ENCODE measurements at regions of chr3 and their contacts with region 1.

Region 1: DNA sequence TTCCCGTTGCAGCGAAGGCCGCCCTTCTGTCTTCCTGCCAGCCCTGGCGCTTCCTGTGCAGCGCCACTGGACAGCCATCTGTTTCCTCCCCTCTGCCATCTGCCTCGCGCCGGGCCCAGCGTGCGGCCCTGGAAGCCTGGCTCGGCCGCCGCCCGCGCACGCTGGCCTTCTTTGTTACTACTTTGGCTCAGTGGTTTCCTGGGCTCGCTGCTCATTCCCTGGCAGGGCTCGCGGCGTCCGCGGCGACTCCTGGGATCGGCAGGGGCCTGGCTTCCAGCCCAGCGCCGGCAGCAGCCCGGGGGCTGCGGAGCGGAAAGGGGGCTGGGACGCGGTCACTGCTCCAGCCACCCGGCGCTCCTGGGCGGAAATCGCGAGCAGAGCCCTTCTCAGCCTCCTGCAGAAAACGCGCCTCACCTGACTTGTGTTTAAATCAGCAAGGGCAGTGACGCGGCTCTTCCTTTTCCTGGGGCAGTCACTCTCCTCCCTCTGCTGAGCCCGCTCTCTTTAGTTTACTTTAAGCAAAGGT is 10.0 kb downstream of the CMTM7 start:
- DNase-seq: peak in 8 of 9 experiments; percentile 50 to 81 (median 70)
- ATAC-seq: peak; percentile 73
- H3K4me3 ChIP-seq: peak overlapping the region; percentile 53 to 66
- H3K4me3 Mint-ChIP-seq: peak overlapping the region; percentile 86
- H3K27ac ChIP-seq: peak overlapping the region; percentile 81 to 83
- H3K27ac Mint-ChIP-seq: peak overlapping the region; percentile 99
- H3K4me1 ChIP-seq: peaks cover 46% of the 10 kb centered on the region
- H3K4me1 Mint-ChIP-seq: peaks cover 78% of the 10 kb centered on the region
- H3K27me3 ChIP-seq: no peaks in the 10 kb centered on the region
- H3K27me3 Mint-ChIP-seq: no peaks in the 10 kb centered on the region
- CTCF ChIP-seq: no peak

Region 2: DNA sequence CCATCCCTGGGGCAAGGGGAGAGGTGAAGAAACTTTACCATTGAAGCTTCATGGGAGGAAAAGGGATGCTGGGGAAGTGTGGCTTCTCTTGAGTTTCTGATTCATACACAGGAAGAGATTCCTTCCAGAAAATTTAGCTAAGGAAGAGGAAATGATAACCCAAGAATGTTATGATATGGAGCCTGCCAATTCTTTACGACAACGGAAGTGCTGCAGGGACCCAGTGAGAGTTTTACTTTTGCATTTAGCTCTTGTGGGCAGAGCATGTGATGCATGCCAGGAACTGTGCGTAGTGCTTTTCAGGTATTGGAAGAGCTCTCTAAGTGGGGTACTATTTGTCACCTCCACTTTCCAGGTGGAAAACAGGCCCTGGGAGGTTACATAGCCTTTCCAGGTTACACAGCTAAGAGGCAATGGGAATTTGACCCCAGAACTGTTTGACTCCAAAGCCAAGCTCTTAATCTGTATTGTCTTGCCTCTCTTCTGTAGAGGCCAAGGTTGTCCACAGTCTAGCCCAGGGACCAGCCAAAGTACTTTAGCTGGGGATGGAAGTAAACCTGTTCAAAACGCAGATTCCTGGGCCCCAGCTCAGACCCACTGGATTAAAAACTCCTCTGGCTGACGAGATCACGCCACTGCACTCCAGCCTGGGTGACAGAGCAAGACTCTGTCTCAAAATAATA is 13.0 kb after region 1 on chr3:
- CTCF ChIA-PET with region 1: interaction called, 28 read pairs
- POLR2A ChIA-PET with region 1: interaction called, 4 read pairs
- intact Hi-C with region 1: loop called (anchors 1 to 2 kb)
- DNase-seq: peak in 7 of 9 experiments; percentile 26 to 80 (median 63)
- ATAC-seq: peak; percentile 94
- H3K4me3 ChIP-seq: no peak overlapping the region
- H3K4me3 Mint-ChIP-seq: peak overlapping the region; percentile 55
- H3K27ac ChIP-seq: peak overlapping the region; percentile 57 to 80
- H3K27ac Mint-ChIP-seq: peak overlapping the region; percentile 97
- H3K4me1 ChIP-seq: peaks cover 56% of the 10 kb centered on the region
- H3K4me1 Mint-ChIP-seq: peaks cover 81% of the 10 kb centered on the region
- H3K27me3 ChIP-seq: no peaks in the 10 kb centered on the region
- H3K27me3 Mint-ChIP-seq: no peaks in the 10 kb centered on the region
- CTCF ChIP-seq: no peak

Region 3: GRCh38 chr3:33711100-33711499 is 1309.5 kb after region 1 on chr3:
- CTCF ChIA-PET with region 1: no interaction called
- POLR2A ChIA-PET with region 1: no interaction called
- intact Hi-C with region 1: no loop called
- DNase-seq: no peak
- ATAC-seq: no peak
- H3K4me3 ChIP-seq: no peak overlapping the region
- H3K4me3 Mint-ChIP-seq: no peak overlapping the region
- H3K27ac ChIP-seq: no peak overlapping the region
- H3K27ac Mint-ChIP-seq: no peak overlapping the region
- H3K4me1 ChIP-seq: peaks cover 3% of the 10 kb centered on the region
- H3K4me1 Mint-ChIP-seq: peaks cover 24% of the 10 kb centered on the region
- H3K27me3 ChIP-seq: no peaks in the 10 kb centered on the region
- H3K27me3 Mint-ChIP-seq: no peaks in the 10 kb centered on the region
- CTCF ChIP-seq: no peak